Common myeloid progenitor, CD34-positive (primary cell): ENCODE measurements at regions of chr22 and their contacts with region 1.

Region 1: DNA sequence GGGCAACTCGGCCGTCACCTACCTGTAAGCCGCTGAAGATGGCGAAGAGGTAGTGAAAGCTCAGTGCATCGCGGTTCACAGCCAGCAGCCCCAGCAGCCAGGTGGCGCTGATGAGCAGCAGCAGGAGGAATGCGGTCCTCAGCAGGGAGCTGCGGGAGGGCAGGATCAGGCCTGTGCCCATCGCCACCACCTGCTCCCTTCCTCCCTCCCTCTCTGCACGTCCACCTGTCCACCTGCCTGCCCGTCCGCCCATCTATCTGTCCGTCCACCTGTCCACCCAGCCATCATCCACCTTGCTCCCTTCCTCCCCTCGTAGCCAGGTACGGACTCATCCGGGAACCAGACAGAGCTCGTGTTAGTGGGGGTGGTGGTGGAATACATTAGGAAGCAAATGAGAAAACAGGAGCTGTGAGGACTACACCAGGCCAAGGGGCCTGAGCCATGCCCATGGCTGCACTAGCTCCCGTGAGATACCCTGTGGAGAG is 32.2 kb downstream of the TRMU start:
- DNase-seq: peak; percentile 60 to 77 (median 68)
- H3K4me3 ChIP-seq: no peak overlapping the region
- H3K27ac ChIP-seq: no peak overlapping the region
- H3K4me1 ChIP-seq: peaks cover 0 to 16% (median 2%) of the 10 kb centered on the region in 4 experiments
- H3K27me3 ChIP-seq: peaks cover 0 to 65% (median 14%) of the 10 kb centered on the region in 5 experiments

Region 2: GRCh38 chr22:46355371-46355995 is 12.3 kb before region 1 on chr22:
- CTCF ChIA-PET with region 1: interaction called, 11 read pairs
- POLR2A ChIA-PET with region 1: no interaction called
- DNase-seq: peak; percentile 57 to 74 (median 67)
- H3K4me3 ChIP-seq: no peak overlapping the region
- H3K27ac ChIP-seq: no peak overlapping the region
- H3K4me1 ChIP-seq: peaks cover 0 to 12% (median 4%) of the 10 kb centered on the region in 4 experiments
- H3K27me3 ChIP-seq: peaks cover 0 to 5% (median 0%) of the 10 kb centered on the region in 5 experiments

Region 3: GRCh38 chr22:46391486-46392136 is 23.9 kb after region 1 on chr22:
- CTCF ChIA-PET with region 1: interaction called, 12 read pairs
- POLR2A ChIA-PET with region 1: no interaction called
- DNase-seq: no peak
- H3K4me3 ChIP-seq: no peak overlapping the region
- H3K27ac ChIP-seq: no peak overlapping the region
- H3K4me1 ChIP-seq: no peaks in the 10 kb centered on the region
- H3K27me3 ChIP-seq: peaks cover 0 to 6% (median 2%) of the 10 kb centered on the region in 5 experiments

Region 4: GRCh38 chr22:46542011-46542985 is 174.5 kb after region 1 on chr22:
- CTCF ChIA-PET with region 1: interaction called, 34 read pairs
- POLR2A ChIA-PET with region 1: no interaction called
- DNase-seq: peak; percentile 67 to 84 (median 79)
- H3K4me3 ChIP-seq: no peak overlapping the region
- H3K27ac ChIP-seq: no peak overlapping the region
- H3K4me1 ChIP-seq: peaks cover 0 to 19% (median 11%) of the 10 kb centered on the region in 4 experiments
- H3K27me3 ChIP-seq: peaks cover 0 to 47% (median 26%) of the 10 kb centered on the region in 5 experiments

Region 5: DNA sequence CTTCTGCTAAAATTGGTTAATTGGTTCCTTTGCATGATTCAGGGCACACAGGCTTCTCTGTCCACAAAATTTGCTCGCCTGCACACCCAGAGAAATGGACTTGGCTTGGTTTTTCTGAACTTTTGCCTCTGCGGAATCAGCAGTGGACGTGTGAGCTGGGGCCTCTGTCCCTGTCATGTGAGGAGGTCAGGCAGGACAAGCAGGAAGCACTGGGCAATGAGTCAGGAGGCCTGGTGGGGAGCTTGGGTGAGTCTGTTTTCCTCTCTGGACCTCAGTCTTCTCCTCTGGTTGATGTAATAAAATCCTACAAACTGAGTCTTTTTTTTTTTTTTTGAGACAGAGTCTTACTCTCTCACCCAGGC is 180.1 kb after region 1 on chr22:
- CTCF ChIA-PET with region 1: interaction called, 34 read pairs
- POLR2A ChIA-PET with region 1: no interaction called
- DNase-seq: no peak
- H3K4me3 ChIP-seq: no peak overlapping the region
- H3K27ac ChIP-seq: no peak overlapping the region
- H3K4me1 ChIP-seq: peaks cover 0 to 10% (median 6%) of the 10 kb centered on the region in 4 experiments
- H3K27me3 ChIP-seq: peaks cover 0 to 11% (median 0%) of the 10 kb centered on the region in 5 experiments